WTC11 (cell line): ENCODE measurements at regions of chr17 and their contacts with region 1.

Region 1: DNA sequence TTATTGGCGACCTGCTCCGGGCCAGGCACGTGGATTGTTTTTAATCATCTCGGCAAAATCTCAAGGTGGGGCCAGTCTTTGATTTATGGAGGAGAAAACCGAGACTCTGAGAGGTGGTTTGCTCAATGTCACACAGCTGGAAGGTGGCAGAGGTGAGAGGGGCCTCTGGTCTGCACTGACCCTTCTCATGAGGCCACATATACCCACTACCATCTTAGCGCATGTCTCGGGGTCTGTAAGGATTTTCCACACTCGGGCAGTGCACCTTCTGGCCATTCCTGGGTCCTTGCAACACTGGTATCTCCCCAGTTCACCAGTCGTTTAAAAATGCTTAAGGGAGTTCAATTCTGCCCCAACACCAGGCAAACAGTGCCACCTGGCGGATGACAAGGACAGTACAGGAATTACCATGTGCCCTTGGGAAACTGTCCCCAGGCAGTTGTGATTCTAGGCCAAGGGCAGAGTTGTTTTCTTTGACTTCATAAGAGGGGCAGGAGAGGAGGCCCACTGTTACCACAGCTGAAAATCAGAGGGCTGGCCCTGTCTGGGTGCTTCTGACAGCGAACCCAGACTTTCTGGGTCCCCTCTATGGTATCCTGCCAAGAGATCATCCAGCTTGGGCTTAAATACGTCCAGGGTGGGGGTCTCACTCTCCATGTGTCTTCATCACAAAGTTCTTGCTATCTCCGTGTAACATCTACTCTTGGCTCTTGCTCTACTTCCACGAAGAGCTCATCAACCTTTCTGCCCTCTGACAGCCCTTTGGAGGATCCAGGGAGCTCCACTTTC is 39.4 kb upstream of the RAI1 start:
- DNase-seq: peak; percentile 85
- ATAC-seq: peak; percentile 96
- H3K4me3 Mint-ChIP-seq: no peak overlapping the region
- H3K27ac Mint-ChIP-seq: no peak overlapping the region
- H3K4me1 Mint-ChIP-seq: peaks cover 7% of the 10 kb centered on the region
- H3K27me3 Mint-ChIP-seq: no peaks in the 10 kb centered on the region; the same call in 1 of the 2 replicates
- CTCF ChIP-seq: peak; percentile 91

Region 2: GRCh38 chr17:17356149-17356930 is 285.5 kb before region 1 on chr17:
- CTCF ChIA-PET with region 1: interaction called, 23 read pairs
- POLR2A ChIA-PET with region 1: no interaction called
- DNase-seq: peak; percentile 85
- ATAC-seq: peak; percentile 80
- H3K4me3 Mint-ChIP-seq: no peak overlapping the region
- H3K27ac Mint-ChIP-seq: no peak overlapping the region
- H3K4me1 Mint-ChIP-seq: peaks cover 3% of the 10 kb centered on the region; the same call in 1 of the 2 replicates
- H3K27me3 Mint-ChIP-seq: peaks cover 4% of the 10 kb centered on the region
- CTCF ChIP-seq: peak; percentile 99

Region 3: GRCh38 chr17:17575360-17576251 is 66.2 kb before region 1 on chr17:
- CTCF ChIA-PET with region 1: no interaction called
- POLR2A ChIA-PET with region 1: no interaction called
- DNase-seq: no peak
- ATAC-seq: no peak
- H3K4me3 Mint-ChIP-seq: no peak overlapping the region
- H3K27ac Mint-ChIP-seq: no peak overlapping the region
- H3K4me1 Mint-ChIP-seq: no peaks in the 10 kb centered on the region
- H3K27me3 Mint-ChIP-seq: no peaks in the 10 kb centered on the region
- CTCF ChIP-seq: no peak

Region 4: GRCh38 chr17:17700251-17700969 is 58.6 kb after region 1 on chr17:
- CTCF ChIA-PET with region 1: no interaction called
- POLR2A ChIA-PET with region 1: no interaction called
- DNase-seq: peak; percentile 83
- ATAC-seq: peak; percentile 73
- H3K4me3 Mint-ChIP-seq: peak overlapping the region; percentile 57
- H3K27ac Mint-ChIP-seq: no peak overlapping the region
- H3K4me1 Mint-ChIP-seq: peaks cover 58% of the 10 kb centered on the region
- H3K27me3 Mint-ChIP-seq: peaks cover 99% of the 10 kb centered on the region
- CTCF ChIP-seq: no peak

Region 5: DNA sequence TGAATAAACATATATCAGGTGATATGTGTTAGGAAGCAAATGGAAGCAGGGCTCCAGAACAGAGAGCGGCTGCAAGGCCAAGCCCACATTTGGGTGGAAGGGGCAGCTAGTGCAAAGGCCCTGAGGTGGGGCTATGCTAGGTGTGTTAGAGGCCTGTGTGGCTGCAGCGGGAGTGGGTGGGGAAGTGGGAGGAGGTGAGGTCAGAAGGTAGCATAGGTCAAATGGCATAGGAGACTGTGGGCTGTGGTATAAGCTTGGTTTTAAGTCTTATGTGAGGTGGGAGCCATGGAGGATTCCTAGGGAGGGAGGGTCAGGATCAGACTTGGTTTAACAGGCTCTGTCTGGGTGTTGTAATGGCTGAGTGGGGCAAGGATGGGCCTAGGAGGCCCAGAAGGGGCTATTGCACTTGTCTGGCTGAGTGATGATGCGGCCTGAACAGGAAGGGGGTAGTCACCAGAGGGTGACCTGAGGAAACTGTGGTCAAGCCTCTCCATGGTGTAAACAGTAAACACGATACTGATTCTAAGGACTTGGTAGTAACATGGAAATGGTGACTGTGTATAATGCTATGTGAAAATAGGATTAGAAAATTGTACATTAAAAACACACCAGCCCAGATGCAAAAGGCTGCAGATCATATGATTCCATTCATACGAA is 70.6 kb after region 1 on chr17:
- CTCF ChIA-PET with region 1: no interaction called
- POLR2A ChIA-PET with region 1: no interaction called
- DNase-seq: no peak
- ATAC-seq: no peak
- H3K4me3 Mint-ChIP-seq: no peak overlapping the region
- H3K27ac Mint-ChIP-seq: no peak overlapping the region
- H3K4me1 Mint-ChIP-seq: peaks cover 35% of the 10 kb centered on the region
- H3K27me3 Mint-ChIP-seq: peaks cover 74% of the 10 kb centered on the region
- CTCF ChIP-seq: no peak